K562 (cell line): ENCODE measurements at regions of chr4 and their contacts with region 1.

Region 1: DNA sequence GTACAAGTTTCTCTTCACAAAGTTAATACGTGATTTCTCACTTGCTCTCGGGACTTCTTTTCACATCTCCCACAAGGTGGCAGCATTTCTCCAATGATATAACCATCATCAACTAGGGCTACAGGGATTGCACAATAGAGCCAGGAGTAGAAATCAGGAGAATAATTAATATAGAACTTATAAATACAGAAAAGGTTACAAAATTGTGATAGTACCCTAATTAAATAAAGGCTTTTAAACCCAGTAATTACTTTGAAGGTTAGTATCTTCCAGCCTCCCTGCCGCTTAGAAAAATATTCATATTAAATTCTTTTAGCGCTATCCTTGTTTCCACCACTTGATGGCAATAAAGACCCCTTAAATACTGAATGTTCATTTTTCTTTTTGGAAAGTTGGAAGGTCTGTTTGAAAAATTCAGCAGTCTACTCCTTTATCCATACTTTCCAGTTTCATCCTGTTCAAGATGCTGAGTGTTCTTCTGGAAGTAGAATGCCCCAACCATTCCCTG is 65.8 kb downstream of the RASGEF1B start:
- DNase-seq: peak; percentile 68 to 83 (median 74)
- ATAC-seq: peak; percentile 87
- H3K4me3 ChIP-seq: no peak overlapping the region
- H3K27ac ChIP-seq: no peak overlapping the region
- H3K4me1 ChIP-seq: peaks cover 0 to 17% of the 10 kb centered on the region in 2 experiments; a peak in 3 of 5 replicates
- H3K27me3 ChIP-seq: peaks cover 3 to 5% of the 10 kb centered on the region in 2 experiments; a peak in 2 of 5 replicates
- CTCF ChIP-seq: peak; percentile 57 to 77 (median 64); a peak in 5 of 6 replicates
- EP300 ChIP-seq: no peak
- POLR2A ChIP-seq: no peak
- RAD21 ChIP-seq: peak; percentile 80 to 96

Region 2: DNA sequence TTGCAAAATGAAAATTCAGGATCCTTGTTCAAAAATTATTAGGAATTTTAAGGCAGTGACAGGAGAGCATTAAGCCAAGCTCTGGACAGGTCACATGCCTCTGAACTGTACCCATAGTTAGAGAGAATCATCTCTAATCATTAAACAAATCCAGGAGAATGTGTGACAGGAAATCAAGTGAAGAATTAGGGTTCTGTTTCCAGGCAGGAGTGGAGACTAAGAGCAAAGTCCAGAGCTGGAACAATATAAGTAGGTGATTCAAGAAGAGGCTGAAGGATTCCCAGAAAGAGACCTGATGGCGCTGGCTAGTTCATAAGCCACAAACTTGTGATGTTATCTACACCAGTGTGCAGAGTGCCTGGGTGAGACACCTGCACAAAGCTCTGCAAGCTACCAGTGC is 86.3 kb before region 1 on chr4:
- CTCF ChIA-PET with region 1: no interaction called
- POLR2A ChIA-PET with region 1: no interaction called
- in situ Hi-C with region 1: no loop called
- intact Hi-C with region 1: no loop called
- DNase-seq: no peak
- ATAC-seq: no peak
- H3K4me3 ChIP-seq: no peak overlapping the region
- H3K27ac ChIP-seq: no peak overlapping the region
- H3K4me1 ChIP-seq: no peaks in the 10 kb centered on the region
- H3K27me3 ChIP-seq: peaks cover 2 to 4% of the 10 kb centered on the region in 2 experiments; a peak in 1 of 5 replicates
- CTCF ChIP-seq: no peak
- EP300 ChIP-seq: no peak
- POLR2A ChIP-seq: no peak
- RAD21 ChIP-seq: no peak

Region 3: GRCh38 chr4:81421346-81422218 is 15.6 kb after region 1 on chr4:
- CTCF ChIA-PET with region 1: interaction called, 3 read pairs
- POLR2A ChIA-PET with region 1: no interaction called
- in situ Hi-C with region 1: no loop called
- intact Hi-C with region 1: loop called (anchors 1 kb)
- DNase-seq: peak; percentile 79 to 95 (median 84)
- ATAC-seq: peak; percentile 97
- H3K4me3 ChIP-seq: no peak overlapping the region
- H3K27ac ChIP-seq: peak overlapping the region; percentile 91
- H3K4me1 ChIP-seq: peaks cover 16 to 69% of the 10 kb centered on the region in 2 experiments
- H3K27me3 ChIP-seq: no peaks in the 10 kb centered on the region
- CTCF ChIP-seq: no peak
- EP300 ChIP-seq: peak; percentile 96
- POLR2A ChIP-seq: peak; percentile 76
- RAD21 ChIP-seq: no peak

Region 4: DNA sequence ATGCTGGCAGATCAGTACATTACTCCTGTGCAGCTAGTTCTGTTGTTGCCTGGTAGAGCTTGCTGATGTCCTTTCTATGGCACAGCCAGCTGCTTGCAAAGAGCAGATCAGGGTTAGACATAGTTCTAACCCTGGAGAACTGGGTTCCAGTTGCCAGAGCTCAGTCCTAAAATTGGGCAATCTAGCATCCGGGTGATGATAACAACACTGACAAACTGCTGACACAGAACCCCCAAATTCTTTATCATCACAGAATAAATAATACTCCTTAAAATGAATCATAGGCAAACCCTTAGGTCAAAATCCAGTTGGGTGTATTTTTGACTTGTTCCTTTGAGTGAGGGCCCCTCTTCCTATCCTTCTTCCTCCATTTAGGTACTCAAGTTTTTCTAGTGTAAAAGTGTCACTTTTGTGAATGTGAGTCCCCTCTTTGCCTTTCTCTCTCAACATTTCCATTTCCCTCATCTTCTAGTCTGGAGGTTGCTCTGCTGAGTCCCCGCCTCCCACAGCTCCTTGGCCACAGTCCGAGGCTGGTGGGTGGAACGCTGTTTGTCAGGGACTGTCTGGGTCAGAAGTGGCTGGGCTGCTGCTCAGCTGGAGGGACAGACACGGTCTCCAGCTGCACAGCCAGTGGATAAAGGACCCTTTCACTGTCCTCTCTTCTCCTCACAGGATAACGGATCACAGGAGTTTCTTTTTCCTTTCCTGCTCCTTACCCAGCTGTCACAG is 159.4 kb after region 1 on chr4:
- CTCF ChIA-PET with region 1: no interaction called
- POLR2A ChIA-PET with region 1: no interaction called
- in situ Hi-C with region 1: no loop called
- intact Hi-C with region 1: no loop called
- DNase-seq: peak in 1 of 4 experiments; percentile 3
- ATAC-seq: no peak; the same call in 2 of the 3 replicates
- H3K4me3 ChIP-seq: no peak overlapping the region
- H3K27ac ChIP-seq: no peak overlapping the region
- H3K4me1 ChIP-seq: no peaks in the 10 kb centered on the region; a peak in 1 of 5 replicates
- H3K27me3 ChIP-seq: no peaks in the 10 kb centered on the region; a peak in 1 of 5 replicates
- CTCF ChIP-seq: no peak
- EP300 ChIP-seq: no peak
- POLR2A ChIP-seq: no peak
- RAD21 ChIP-seq: no peak

Region 5: DNA sequence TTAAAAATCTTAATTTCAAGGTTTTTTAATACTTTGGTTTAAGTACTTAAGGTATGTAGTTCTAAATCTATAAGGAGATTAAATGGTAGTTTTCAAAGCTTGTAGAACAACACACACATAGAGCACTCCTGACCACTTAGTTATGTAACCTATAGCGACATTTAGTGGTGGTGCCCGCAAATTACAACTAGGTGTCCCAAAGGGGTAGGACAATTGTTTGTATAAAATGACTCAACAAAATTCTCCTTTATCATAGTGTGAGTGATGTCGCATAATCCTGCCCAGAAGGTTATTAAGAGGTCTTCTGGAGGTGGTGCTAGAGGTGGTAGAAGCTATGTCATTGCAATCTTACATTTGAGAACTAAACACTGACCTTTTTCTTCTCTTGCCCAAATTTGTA is 438.8 kb after region 1 on chr4:
- CTCF ChIA-PET with region 1: interaction called, 31 read pairs
- POLR2A ChIA-PET with region 1: no interaction called
- in situ Hi-C with region 1: loop called (anchors 10 kb)
- intact Hi-C with region 1: loop called (anchors 1 kb)
- DNase-seq: peak; percentile 56 to 82 (median 68)
- ATAC-seq: peak; percentile 99
- H3K4me3 ChIP-seq: no peak overlapping the region
- H3K27ac ChIP-seq: no peak overlapping the region
- H3K4me1 ChIP-seq: peaks cover 0 to 11% of the 10 kb centered on the region in 2 experiments; a peak in 2 of 5 replicates
- H3K27me3 ChIP-seq: peaks cover 0 to 8% of the 10 kb centered on the region in 2 experiments; a peak in 2 of 5 replicates
- CTCF ChIP-seq: peak; percentile 63 to 90 (median 84)
- EP300 ChIP-seq: no peak
- POLR2A ChIP-seq: no peak
- RAD21 ChIP-seq: peak; percentile 91 to 92

Region 6: DNA sequence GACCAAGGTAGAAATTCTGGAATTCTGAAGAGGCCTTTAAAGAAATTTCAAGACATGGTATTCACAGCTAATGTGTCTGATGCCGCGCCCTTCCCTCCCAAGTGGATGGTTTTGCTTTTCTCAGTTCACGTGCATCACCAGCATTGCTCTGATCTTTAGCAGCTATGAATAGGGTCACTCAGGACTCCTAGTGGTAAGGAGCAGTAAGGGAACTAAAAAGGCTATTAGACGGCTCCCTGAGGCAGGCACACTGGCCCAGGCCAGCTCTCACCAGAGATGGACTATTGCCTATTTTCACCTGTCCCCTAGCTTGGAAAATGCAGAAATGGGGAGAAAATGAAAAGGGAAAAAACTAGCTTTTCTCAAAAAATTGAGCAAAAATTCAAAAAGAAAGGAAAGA is 513.3 kb after region 1 on chr4:
- CTCF ChIA-PET with region 1: no interaction called
- POLR2A ChIA-PET with region 1: no interaction called
- in situ Hi-C with region 1: loop called (anchors 10 kb)
- intact Hi-C with region 1: loop called (anchors 2 kb)
- DNase-seq: peak; percentile 25 to 46 (median 32)
- ATAC-seq: peak; percentile 98
- H3K4me3 ChIP-seq: no peak overlapping the region
- H3K27ac ChIP-seq: no peak overlapping the region
- H3K4me1 ChIP-seq: no peaks in the 10 kb centered on the region
- H3K27me3 ChIP-seq: peaks cover 0 to 11% of the 10 kb centered on the region in 2 experiments; a peak in 3 of 5 replicates
- CTCF ChIP-seq: peak; percentile 57 to 61 (median 58)
- EP300 ChIP-seq: no peak
- POLR2A ChIP-seq: no peak
- RAD21 ChIP-seq: peak; percentile 33 to 46

Region 7: GRCh38 chr4:82268050-82268825 is 862.3 kb after region 1 on chr4:
- CTCF ChIA-PET with region 1: interaction called, 21 read pairs
- POLR2A ChIA-PET with region 1: no interaction called
- in situ Hi-C with region 1: no loop called
- intact Hi-C with region 1: loop called (anchors 2 kb)
- DNase-seq: peak; percentile 22 to 59 (median 41)
- ATAC-seq: peak; percentile 99
- H3K4me3 ChIP-seq: no peak overlapping the region
- H3K27ac ChIP-seq: no peak overlapping the region
- H3K4me1 ChIP-seq: no peaks in the 10 kb centered on the region
- H3K27me3 ChIP-seq: peaks cover 7 to 20% of the 10 kb centered on the region in 2 experiments; a peak in 4 of 5 replicates
- CTCF ChIP-seq: peak; percentile 74 to 81 (median 76)
- EP300 ChIP-seq: no peak
- POLR2A ChIP-seq: no peak
- RAD21 ChIP-seq: peak; percentile 79 to 83